HCT116 (cell line): ENCODE measurements at regions of chr11 and their contacts with region 1.

Region 1: GRCh38 chr11:59448484-59448883 is 8.3 kb upstream of the OR4D6 start:
- DNase-seq: no peak
- ATAC-seq: no peak
- H3K4me3 ChIP-seq: no peak overlapping the region
- H3K27ac ChIP-seq: no peak overlapping the region
- H3K4me1 ChIP-seq: no peaks in the 10 kb centered on the region
- H3K27me3 ChIP-seq: no peaks in the 10 kb centered on the region
- CTCF ChIP-seq: no peak
- POLR2A ChIP-seq: no peak
- RAD21 ChIP-seq: no peak

Region 2: DNA sequence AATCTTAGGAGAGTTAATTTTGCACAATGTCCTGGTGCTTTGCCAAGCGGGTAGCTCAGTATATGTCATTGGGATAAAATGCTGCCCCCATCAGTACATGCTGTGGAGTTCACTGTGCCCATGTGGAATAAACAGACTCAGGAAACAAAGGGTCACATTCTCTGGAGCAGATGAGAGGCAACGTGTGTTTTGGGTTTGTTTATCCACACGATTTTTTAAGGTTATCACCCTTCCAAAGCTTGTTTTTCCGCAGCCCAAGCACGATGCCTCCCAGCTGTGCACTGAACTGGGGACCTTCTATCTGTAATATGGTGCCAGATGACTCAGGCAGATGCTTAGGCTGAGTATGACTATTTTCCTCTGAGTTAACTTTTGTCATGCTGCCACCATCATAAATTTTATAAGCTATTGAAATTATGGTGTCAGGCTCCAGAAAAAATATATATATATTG is 14.7 kb after region 1 on chr11:
- CTCF ChIA-PET with region 1: no interaction called
- POLR2A ChIA-PET with region 1: no interaction called
- RAD21 ChIA-PET with region 1: no interaction called
- intact Hi-C with region 1: no loop called
- DNase-seq: no peak
- ATAC-seq: peak; percentile 72
- H3K4me3 ChIP-seq: no peak overlapping the region
- H3K27ac ChIP-seq: no peak overlapping the region
- H3K4me1 ChIP-seq: no peaks in the 10 kb centered on the region
- H3K27me3 ChIP-seq: no peaks in the 10 kb centered on the region
- CTCF ChIP-seq: peak in 1 of 3 experiments; percentile 5; a peak in 2 of 6 replicates
- POLR2A ChIP-seq: no peak
- RAD21 ChIP-seq: no peak

Region 3: DNA sequence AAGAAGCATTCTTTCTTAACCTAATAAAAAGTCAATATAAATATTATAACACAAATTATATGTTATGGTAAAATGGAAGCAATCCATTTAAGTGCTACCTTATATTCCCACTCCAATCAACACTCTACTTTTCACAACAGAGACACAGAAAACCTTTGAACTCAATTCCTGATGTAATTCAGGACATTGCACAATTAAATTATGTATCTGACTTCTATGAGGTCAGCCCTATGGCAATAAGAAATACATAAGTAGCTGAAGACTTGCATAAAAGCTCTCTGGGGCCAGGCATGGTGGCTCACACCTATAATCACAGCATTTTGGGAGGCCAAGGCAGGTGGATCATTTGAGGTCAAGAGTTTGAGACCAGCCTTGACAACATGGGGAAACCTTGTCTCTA is 31.4 kb after region 1 on chr11:
- CTCF ChIA-PET with region 1: no interaction called
- POLR2A ChIA-PET with region 1: no interaction called
- RAD21 ChIA-PET with region 1: no interaction called
- intact Hi-C with region 1: loop called (anchors 5 kb)
- DNase-seq: no peak
- ATAC-seq: no peak
- H3K4me3 ChIP-seq: no peak overlapping the region
- H3K27ac ChIP-seq: no peak overlapping the region
- H3K4me1 ChIP-seq: no peaks in the 10 kb centered on the region
- H3K27me3 ChIP-seq: no peaks in the 10 kb centered on the region
- CTCF ChIP-seq: no peak
- POLR2A ChIP-seq: no peak
- RAD21 ChIP-seq: no peak

Region 4: GRCh38 chr11:59560702-59561469 is 112.4 kb after region 1 on chr11:
- CTCF ChIA-PET with region 1: no interaction called
- POLR2A ChIA-PET with region 1: no interaction called
- RAD21 ChIA-PET with region 1: no interaction called
- intact Hi-C with region 1: no loop called
- DNase-seq: peak; percentile 83
- ATAC-seq: peak; percentile 37
- H3K4me3 ChIP-seq: peak overlapping the region; percentile 54 to 58
- H3K27ac ChIP-seq: peak overlapping the region; percentile 65
- H3K4me1 ChIP-seq: peaks cover 37 to 87% of the 10 kb centered on the region in 2 experiments
- H3K27me3 ChIP-seq: no peaks in the 10 kb centered on the region
- CTCF ChIP-seq: no peak
- POLR2A ChIP-seq: no peak
- RAD21 ChIP-seq: no peak